Spleen (tissue), 13 donors: ENCODE measurements at regions of chr6 and their contacts with region 1.

Region 1: GRCh38 chr6:36765594-36766398 is 68.2 kb downstream of the RAB44 start:
- DNase-seq: peak; percentile 94
- H3K4me3 ChIP-seq: no peak overlapping the region
- H3K27ac ChIP-seq: no peak overlapping the region
- H3K4me1 ChIP-seq: peaks cover 23 to 58% (median 46%) of the 10 kb centered on the region in 6 donors
- H3K27me3 ChIP-seq: no peaks in the 10 kb centered on the region
- CTCF ChIP-seq: peak; percentile 82 to 98 (median 92)
- POLR2A ChIP-seq: no peak

Region 2: DNA sequence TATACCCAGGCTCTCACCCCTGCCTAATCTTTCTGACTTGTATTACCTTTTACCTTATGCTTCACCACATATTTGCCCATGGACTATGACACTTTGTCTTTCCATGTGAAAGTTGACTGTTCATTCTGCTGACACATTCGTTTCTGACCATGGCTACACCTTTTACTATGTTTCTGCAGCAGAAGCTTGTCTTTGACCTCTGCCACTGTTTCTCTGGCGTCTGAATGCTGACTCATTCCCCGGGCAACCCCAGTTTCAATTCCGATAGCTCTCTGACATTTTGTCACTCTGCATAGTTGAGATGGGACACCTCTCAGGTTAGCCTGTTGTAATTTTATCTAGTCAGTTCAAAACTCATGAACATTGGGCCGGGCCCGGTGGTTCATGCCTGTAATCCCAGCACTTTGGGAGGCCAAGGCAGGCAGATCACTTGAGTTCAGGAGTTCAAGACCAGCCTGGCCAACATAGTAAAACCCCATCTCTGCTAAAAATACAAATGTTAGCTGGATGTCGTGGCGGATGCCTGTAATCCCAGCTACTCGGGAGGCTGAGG is 792.0 kb before region 1 on chr6:
- intact Hi-C with region 1: no loop called
- DNase-seq: no peak
- H3K4me3 ChIP-seq: no peak overlapping the region
- H3K27ac ChIP-seq: no peak overlapping the region
- H3K4me1 ChIP-seq: no peaks in the 10 kb centered on the region
- H3K27me3 ChIP-seq: no peaks in the 10 kb centered on the region
- CTCF ChIP-seq: no peak
- POLR2A ChIP-seq: no peak

Region 3: GRCh38 chr6:36851149-36851614 is 85.4 kb after region 1 on chr6:
- intact Hi-C with region 1: loop called (anchors 2 kb)
- DNase-seq: no peak
- H3K4me3 ChIP-seq: no peak overlapping the region
- H3K27ac ChIP-seq: peak overlapping the region in 6 of 8 donors; percentile 18 to 82 (median 54)
- H3K4me1 ChIP-seq: peaks cover 0 to 61% (median 28%) of the 10 kb centered on the region in 6 donors
- H3K27me3 ChIP-seq: no peaks in the 10 kb centered on the region
- CTCF ChIP-seq: peak; percentile 48 to 92 (median 78)
- POLR2A ChIP-seq: no peak